OCI-LY7 (cell line): ENCODE measurements at regions of chr6 and their contacts with region 1.

Region 1: DNA sequence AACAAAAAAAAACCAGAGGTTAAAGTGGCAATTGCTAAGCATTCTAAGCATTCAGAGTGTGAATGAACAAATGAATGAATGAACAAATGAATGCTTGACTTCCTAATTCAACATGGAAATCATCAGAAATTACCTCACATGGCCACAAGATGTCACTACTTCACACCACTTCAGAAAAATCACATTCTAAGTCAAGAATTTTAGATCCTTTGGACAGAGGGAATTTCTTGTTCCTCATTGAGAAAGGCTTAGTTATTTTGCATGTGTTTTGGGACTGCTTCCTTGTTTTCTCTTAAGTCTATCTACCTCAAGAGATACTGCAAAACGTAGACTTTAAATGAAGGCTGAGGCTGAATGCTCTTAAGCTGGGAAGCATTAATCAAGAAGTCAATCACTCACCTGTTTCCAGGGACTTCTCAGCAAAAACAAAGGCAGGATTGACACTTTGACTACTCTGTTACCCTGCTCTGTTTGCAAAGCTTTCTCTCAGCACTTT is 120.2 kb downstream of the MBOAT1 start:
- DNase-seq: peak; percentile 27
- H3K4me3 ChIP-seq: no peak overlapping the region
- H3K27ac ChIP-seq: no peak overlapping the region
- H3K4me1 ChIP-seq: no peaks in the 10 kb centered on the region
- CTCF ChIP-seq: peak; percentile 82

Region 2: GRCh38 chr6:20126789-20127653 is 34.9 kb after region 1 on chr6:
- CTCF ChIA-PET with region 1: no interaction called
- POLR2A ChIA-PET with region 1: no interaction called
- intact Hi-C with region 1: loop called (anchors 5 kb)
- DNase-seq: peak; percentile 66
- H3K4me3 ChIP-seq: no peak overlapping the region
- H3K27ac ChIP-seq: no peak overlapping the region
- H3K4me1 ChIP-seq: no peaks in the 10 kb centered on the region
- CTCF ChIP-seq: peak; percentile 97